ENCODE measurements at regions of chr9 and their contacts with region 1.

Region 1: DNA sequence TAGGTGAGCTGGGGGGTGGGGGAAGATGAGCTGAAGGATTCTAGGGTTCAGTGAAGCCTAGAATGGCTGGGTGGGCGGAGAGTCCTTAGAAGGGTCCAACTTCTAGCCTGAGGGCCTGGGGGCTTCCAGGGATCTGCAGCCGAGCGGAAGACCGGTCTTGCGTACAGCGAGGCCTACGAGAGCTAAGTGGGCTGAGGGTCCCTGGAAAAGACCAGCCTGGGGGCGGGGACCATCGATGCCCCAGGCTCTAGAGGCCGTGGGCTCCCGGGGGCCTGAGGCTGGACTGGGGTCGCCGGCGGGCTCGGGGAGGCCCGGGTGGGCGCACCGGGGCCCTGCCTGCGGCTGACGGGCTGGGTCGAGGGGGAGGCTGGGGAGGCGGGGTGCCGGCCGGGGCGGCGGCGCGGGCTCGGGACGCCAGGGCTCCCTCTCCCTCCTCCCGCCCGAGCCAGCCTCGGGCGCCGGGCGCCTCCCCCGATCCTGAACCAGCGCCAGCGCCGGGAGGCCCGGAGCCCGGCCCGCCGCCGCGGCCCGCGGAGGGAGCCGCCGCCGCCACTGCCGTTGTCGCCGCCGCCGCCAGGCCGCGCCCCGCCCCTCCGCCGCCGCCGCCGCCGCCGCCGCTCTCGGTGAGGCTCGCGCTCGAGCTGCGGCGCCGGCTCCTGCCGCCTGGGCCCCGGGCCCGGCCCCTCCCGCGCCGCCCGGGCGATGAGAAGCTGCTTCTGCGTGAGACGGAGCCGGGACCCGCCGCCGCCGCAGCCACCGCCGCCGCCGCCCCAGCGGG is at the start of gene MVB12B:
- DNase-seq: no peak
- H3K4me3 ChIP-seq: peak within 1 kb of the TSS; percentile 55 to 71 (median 64)
- H3K27ac ChIP-seq: peak within 1 kb of the TSS; percentile 85 to 89 (median 86)
- H3K4me1 ChIP-seq: peaks cover 0 to 29% (median 19%) of the 10 kb centered on the region in 4 donors
- H3K27me3 ChIP-seq: no peaks in the 10 kb centered on the region
- CTCF ChIP-seq: no peak
- EP300 ChIP-seq: no peak
- POLR2A ChIP-seq: no peak
- total RNA-seq, gene MVB12B: 12.2 to 14.4 (median 13.3) TPM

Region 2: DNA sequence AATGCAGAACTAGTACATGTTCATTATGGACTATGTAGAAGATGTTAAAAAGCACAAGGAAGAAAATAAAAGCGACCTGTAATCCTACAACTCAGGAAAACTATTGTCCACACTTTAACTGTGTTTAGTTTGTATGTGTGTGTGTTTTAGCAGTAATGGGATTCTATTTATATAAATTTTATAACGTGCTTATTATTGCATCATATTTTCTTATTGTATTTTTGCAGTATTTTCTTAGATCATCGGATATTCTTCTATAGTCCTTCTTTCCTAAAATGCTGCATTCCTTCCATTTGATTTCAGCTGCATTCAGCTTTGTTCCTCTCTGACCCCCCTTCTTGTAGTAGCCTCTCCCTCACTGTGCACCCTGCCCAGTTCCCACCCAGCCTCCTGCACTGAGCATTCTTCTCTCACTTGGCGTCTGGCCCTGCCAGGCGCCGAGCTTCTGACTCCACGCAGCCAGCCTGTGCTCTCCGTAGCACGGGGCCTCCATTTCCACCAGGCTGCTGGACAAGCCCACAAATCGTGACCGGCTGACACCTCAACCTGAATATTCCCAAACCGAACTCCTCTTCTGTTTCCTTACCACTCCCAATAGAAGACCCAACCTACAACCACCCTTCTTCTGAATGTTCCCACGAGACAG is 40.1 kb after region 1 on chr9:
- intact Hi-C with region 1: loop called (anchors 5 kb)
- DNase-seq: peak; percentile 78
- H3K4me3 ChIP-seq: no peak overlapping the region
- H3K27ac ChIP-seq: peak overlapping the region; percentile 42 to 58 (median 46)
- H3K4me1 ChIP-seq: peaks cover 0 to 35% (median 25%) of the 10 kb centered on the region in 4 donors
- H3K27me3 ChIP-seq: no peaks in the 10 kb centered on the region
- CTCF ChIP-seq: no peak
- EP300 ChIP-seq: no peak
- POLR2A ChIP-seq: no peak

Region 3: GRCh38 chr9:126398403-126399058 is 72.1 kb after region 1 on chr9:
- intact Hi-C with region 1: loop called (anchors 5 kb)
- DNase-seq: peak; percentile 86
- H3K4me3 ChIP-seq: no peak overlapping the region
- H3K27ac ChIP-seq: no peak overlapping the region
- H3K4me1 ChIP-seq: peaks cover 0 to 10% (median 3%) of the 10 kb centered on the region in 4 donors
- H3K27me3 ChIP-seq: no peaks in the 10 kb centered on the region
- CTCF ChIP-seq: peak; percentile 76 to 95 (median 92)
- EP300 ChIP-seq: no peak
- POLR2A ChIP-seq: no peak